ENCODE measurements at regions of chr4 and their contacts with region 1.

Region 1: DNA sequence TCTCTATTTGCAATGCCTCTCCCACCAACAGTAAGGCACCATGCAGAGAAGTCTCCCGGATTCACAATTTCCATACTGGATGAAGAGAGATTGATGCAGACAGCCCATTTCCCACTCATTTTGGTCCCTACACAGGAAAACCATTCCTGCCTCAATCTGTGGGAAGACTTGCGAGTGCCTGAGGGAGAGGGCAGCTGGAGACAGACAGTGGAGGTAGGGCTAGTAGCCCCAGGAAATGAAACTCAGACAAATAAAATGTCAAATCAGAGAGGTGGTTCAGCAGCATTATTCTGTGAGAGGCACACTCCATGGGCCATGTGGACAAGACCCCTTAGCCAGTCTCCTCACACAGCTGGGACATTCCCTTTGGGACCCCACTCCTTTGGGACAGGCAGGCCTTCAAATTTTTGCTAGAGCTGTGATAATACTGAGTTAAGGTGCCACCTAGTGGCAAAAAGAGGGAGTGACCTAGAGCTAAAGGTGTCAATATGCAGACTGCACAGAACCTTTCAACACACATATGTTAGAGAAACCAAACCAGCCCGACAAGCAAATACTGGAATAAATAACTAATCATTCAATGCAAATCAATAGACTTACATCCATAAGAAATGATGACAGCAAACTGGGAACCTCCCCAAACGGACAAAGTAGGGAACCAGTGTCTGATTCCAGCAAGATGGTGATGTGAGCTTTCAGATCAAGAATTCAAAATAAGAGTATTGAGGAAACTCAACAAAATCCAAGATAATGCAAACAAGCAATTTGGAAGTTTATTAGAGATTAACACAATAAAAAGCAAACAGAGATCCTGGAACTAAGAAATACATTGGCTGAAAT is 1865.3 kb upstream of the AGA start:
- DNase-seq: peak; percentile 24
- ATAC-seq: peak; percentile 83
- H3K4me3 ChIP-seq: no peak overlapping the region
- H3K27ac ChIP-seq: no peak overlapping the region
- H3K4me1 ChIP-seq: no peaks in the 10 kb centered on the region
- H3K27me3 ChIP-seq: no peaks in the 10 kb centered on the region
- CTCF ChIP-seq: peak; percentile 68
- EP300 ChIP-seq: no peak
- POLR2A ChIP-seq: no peak
- RAD21 ChIP-seq: peak; percentile 47; the same call in 1 of the 2 replicates

Region 2: DNA sequence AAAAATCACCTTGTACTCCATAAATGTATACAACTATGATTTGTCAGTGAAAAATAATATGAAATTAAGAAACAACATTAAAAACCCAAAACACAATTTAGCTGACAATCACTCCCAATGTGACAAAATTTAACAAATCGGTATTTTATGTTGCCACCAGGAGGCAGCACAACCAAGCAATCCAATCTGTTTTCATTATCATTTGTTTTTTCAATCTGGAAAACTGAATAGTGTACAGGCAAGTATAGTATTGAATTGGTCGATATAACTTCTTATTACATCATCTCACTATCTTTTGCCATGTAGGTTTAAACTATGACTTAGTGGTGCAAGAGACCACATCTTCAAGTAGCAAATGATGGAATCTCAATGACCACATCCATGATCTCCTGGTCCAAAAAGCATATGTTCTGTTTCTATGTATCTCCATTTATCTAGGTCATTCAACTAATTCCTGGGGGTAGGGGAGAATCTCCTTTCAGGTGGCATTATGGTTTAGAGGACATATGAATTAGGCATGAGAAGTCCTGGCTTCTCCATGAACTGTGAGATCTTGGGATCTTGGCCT is 1752.4 kb before region 1 on chr4:
- CTCF ChIA-PET with region 1: interaction called, 8 read pairs
- POLR2A ChIA-PET with region 1: no interaction called
- in situ Hi-C with region 1: loop called (anchors 10 kb)
- intact Hi-C with region 1: loop called (anchors 1 kb)
- DNase-seq: no peak
- ATAC-seq: no peak
- H3K4me3 ChIP-seq: no peak overlapping the region
- H3K27ac ChIP-seq: no peak overlapping the region
- H3K4me1 ChIP-seq: no peaks in the 10 kb centered on the region
- H3K27me3 ChIP-seq: no peaks in the 10 kb centered on the region
- CTCF ChIP-seq: peak; percentile 60
- EP300 ChIP-seq: no peak
- POLR2A ChIP-seq: no peak
- RAD21 ChIP-seq: 0 out of 2 replicates have a peak, but pooled peaks have one; percentile 12

Region 3: DNA sequence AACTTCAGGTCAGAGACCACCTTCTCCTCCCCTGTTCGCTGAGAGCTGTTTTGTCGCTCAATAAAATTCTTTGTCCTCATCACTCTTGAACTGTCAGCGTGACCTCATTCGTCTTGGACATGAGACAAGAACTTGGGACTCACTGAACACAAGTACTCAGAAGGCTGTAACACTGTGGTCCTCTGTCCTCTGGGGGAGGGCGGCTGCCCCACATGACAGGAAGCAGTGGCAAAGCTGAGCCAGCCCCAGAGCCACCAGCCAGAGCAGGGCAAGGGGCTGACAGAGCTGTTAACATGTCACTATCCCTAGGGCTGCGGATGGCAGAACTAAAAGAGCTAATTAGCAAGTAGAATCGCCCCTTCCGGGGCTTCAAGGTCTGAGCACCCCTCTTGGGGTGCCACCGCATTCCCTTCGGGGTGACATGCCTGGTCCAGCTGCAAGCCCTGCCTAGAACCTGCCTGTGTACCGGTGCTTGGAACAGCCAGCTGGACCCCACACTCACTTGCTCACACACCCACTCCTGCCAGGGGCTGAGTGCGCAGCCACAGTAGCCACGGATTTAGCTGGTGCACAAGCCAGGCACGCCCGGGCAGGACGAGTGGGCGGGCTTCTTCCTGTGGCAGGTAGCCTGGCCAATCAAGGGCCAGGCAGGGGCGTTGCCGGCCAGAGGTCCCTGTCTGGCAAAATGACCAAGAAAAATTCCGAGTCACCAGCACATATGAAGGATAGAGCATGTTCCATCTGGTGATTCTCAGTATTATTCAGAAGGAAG is 1216.7 kb before region 1 on chr4:
- CTCF ChIA-PET with region 1: no interaction called
- POLR2A ChIA-PET with region 1: no interaction called
- in situ Hi-C with region 1: no loop called
- intact Hi-C with region 1: no loop called
- DNase-seq: no peak
- ATAC-seq: no peak; the same call in 2 of the 3 replicates
- H3K4me3 ChIP-seq: no peak overlapping the region
- H3K27ac ChIP-seq: no peak overlapping the region
- H3K4me1 ChIP-seq: no peaks in the 10 kb centered on the region
- H3K27me3 ChIP-seq: no peaks in the 10 kb centered on the region
- CTCF ChIP-seq: no peak
- EP300 ChIP-seq: no peak
- POLR2A ChIP-seq: no peak
- RAD21 ChIP-seq: no peak

Region 4: GRCh38 chr4:178577933-178578332 is 729.6 kb before region 1 on chr4:
- CTCF ChIA-PET with region 1: interaction called, 6 read pairs
- POLR2A ChIA-PET with region 1: no interaction called
- in situ Hi-C with region 1: no loop called
- intact Hi-C with region 1: loop called (anchors 5 kb)
- DNase-seq: peak; percentile 1
- ATAC-seq: no peak
- H3K4me3 ChIP-seq: no peak overlapping the region
- H3K27ac ChIP-seq: no peak overlapping the region
- H3K4me1 ChIP-seq: no peaks in the 10 kb centered on the region
- H3K27me3 ChIP-seq: no peaks in the 10 kb centered on the region; a peak in 1 of 5 replicates
- CTCF ChIP-seq: 0 out of 2 replicates have a peak, but pooled peaks have one; percentile 7
- EP300 ChIP-seq: no peak
- POLR2A ChIP-seq: no peak
- RAD21 ChIP-seq: no peak

Region 5: DNA sequence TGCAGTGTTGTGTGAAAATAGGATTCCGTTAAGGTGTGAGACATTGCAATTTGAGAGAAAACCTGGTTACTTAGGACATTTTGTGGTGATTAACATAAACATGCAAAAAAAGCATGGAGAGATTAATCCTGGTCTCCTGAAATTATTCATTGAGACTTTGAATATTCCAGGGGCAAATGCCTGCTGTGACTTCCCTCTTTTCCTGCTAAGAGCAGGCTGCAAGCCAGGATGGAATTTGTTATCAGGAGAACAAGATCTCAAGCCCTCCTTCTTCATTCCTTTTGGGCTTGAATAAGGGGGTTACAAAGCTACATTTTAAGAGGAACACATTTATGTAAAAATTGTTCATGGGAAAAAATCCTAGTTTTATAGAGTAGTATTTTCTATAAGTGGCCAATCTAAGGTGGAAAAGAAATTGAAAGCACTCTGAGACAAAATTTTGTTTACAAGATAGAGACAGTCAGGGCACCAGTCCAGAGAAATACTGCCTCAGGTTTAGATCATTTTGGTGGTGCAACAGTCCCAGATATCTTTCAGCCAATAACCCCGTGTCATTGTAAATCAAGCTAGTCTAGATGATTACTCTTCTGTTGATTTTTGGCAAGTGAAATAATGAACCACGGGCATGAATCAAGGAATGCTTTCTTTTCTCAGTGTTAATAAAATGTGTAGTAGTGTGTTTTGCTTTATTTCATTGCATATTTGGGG is 336.9 kb before region 1 on chr4:
- CTCF ChIA-PET with region 1: no interaction called
- POLR2A ChIA-PET with region 1: no interaction called
- in situ Hi-C with region 1: no loop called
- intact Hi-C with region 1: loop called (anchors 5 kb)
- DNase-seq: no peak
- ATAC-seq: no peak
- H3K4me3 ChIP-seq: no peak overlapping the region
- H3K27ac ChIP-seq: no peak overlapping the region
- H3K4me1 ChIP-seq: no peaks in the 10 kb centered on the region
- H3K27me3 ChIP-seq: no peaks in the 10 kb centered on the region
- CTCF ChIP-seq: no peak
- EP300 ChIP-seq: no peak
- POLR2A ChIP-seq: no peak
- RAD21 ChIP-seq: no peak